ENCODE measurements at regions of chr5 and their contacts with region 1.

Region 1: GRCh38 chr5:142922223-142922952 is 152.2 kb downstream of the ARHGAP26 start:
- DNase-seq: peak; percentile 51
- H3K4me3 ChIP-seq: no peak overlapping the region
- H3K27ac ChIP-seq: no peak overlapping the region
- H3K4me1 ChIP-seq: peaks cover 3 to 11% of the 10 kb centered on the region in 2 experiments
- H3K27me3 ChIP-seq: no peaks in the 10 kb centered on the region
- CTCF ChIP-seq: peak; percentile 66
- EP300 ChIP-seq: no peak
- RAD21 ChIP-seq: peak; percentile 79

Region 2: DNA sequence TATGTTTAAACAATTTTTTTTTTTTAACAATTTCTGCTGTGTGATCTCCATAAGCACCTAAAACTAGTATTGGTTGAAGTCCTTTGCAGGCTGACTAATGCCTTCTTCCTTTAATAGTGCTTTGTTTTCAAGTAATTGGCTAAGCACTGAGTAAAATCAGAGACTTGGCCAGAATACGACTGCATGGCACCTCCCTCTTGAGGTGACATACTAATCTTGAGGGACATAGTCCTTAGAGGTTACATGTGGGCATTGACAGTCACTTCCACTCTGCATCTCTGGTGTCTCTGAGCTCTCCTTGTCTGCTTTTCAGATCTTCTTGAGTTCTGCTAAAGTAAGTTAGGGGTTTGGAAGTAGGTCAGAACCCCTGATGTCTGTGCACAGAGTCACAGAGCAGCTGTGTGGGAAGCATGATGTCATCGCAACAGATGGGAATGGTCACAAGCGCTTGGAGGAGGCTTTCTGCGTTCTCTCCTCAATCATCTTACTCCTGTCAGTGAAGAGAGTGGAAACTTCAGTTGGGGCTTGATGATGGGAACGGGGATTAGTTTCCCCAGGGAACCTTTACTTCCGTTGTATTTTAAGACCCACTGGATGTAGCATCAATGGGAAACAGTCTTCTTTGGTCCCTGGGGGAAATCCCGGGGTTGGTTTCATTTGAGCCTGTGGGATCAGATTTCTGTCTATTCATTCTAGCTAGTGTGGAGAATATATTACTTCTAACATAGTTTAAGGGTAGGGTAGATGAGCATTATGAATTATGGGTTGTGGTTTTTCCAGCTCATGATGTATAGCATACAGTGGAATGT is 15.3 kb before region 1 on chr5:
- CTCF ChIA-PET with region 1: interaction called, 28 read pairs
- POLR2A ChIA-PET with region 1: no interaction called
- DNase-seq: no peak
- H3K4me3 ChIP-seq: no peak overlapping the region
- H3K27ac ChIP-seq: no peak overlapping the region
- H3K4me1 ChIP-seq: peaks cover 0 to 8% of the 10 kb centered on the region in 2 experiments; a peak in 1 of 4 replicates
- H3K27me3 ChIP-seq: no peaks in the 10 kb centered on the region
- CTCF ChIP-seq: no peak
- EP300 ChIP-seq: no peak
- RAD21 ChIP-seq: no peak

Region 3: DNA sequence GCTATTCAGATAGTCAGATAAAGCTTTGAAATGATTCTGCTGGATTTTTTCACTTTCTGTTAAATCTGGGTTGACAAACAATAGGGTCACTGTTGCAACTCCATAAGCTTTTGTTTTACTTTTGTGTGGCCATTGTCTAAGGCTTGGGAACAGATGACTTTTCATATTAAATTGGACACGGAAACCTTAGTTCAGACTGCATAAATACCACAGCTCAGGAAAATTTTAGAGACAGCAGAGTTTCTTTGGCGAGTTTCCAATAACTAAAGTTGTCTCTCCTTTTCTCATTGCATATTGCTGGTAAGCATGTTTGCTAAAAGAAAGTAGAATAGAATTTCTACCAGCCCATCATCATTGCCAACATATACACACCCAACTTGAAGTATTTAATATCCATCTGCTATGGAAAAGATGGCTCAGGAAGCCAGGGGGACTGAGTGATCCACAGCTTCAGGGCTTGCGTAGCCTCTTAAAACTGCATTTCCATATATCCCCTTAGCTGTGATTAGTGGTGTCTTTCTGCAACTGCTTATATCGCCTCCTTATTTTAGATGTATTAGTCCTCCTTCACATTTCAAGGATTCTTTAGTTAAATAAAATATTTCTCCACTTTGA is 16.0 kb after region 1 on chr5:
- CTCF ChIA-PET with region 1: interaction called, 20 read pairs
- POLR2A ChIA-PET with region 1: interaction called, 3 read pairs
- DNase-seq: no peak
- H3K4me3 ChIP-seq: no peak overlapping the region
- H3K27ac ChIP-seq: peak overlapping the region in 1 of 2 experiments; percentile 47; a peak in 1 of 4 replicates
- H3K4me1 ChIP-seq: peaks cover 6 to 28% of the 10 kb centered on the region in 2 experiments
- H3K27me3 ChIP-seq: no peaks in the 10 kb centered on the region
- CTCF ChIP-seq: no peak
- EP300 ChIP-seq: no peak
- RAD21 ChIP-seq: no peak

Region 4: DNA sequence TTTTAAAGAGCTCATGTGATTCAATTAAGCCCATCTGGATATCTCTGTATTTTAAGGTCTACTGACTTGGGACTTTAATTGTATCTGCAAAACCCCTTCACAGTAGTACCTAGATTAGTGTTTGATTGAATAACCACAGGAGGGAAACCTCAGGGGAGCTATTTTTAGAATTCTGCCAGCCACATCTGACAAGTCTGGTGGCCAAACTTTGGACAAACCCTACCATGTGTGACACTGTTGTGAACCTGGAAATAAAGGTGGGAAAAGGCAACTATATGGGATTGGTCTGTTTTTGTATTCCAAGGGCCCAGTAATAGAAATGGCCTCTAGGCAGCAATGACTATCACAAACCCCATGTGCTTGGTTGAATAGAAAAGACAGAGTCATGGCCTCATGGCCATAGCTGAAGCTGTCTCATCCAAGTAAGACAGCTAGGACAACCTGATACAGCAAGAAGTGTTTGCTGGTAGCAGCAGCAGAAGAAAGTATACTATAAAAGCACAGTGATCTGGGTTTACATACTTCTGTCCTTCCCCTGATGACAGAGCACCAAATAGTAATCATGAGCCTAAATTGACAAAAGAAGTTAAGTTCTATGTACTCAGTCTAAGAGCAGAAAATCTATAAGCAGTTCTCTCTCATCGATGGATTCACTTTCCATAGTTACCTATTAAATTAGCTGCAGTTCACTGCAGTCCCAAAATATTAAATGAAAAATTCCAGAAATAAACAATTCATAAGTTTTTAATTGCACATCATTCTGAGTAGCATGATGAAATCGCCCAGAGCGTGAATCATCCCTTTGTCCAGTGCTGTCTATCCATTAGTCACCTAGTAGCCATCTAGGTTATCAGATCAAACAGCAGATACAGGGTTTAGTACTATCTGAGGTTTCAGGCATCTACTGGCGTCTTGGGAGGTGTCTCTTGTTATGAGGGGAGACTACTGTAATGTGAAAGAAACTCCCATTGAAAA is 37.6 kb after region 1 on chr5:
- CTCF ChIA-PET with region 1: interaction called, 14 read pairs
- POLR2A ChIA-PET with region 1: no interaction called
- DNase-seq: no peak
- H3K4me3 ChIP-seq: no peak overlapping the region; a peak in 1 of 4 replicates
- H3K27ac ChIP-seq: peak overlapping the region; percentile 34 to 91; a peak in 3 of 4 replicates
- H3K4me1 ChIP-seq: peaks cover 4 to 20% of the 10 kb centered on the region in 2 experiments; a peak in 3 of 4 replicates
- H3K27me3 ChIP-seq: no peaks in the 10 kb centered on the region
- CTCF ChIP-seq: no peak
- EP300 ChIP-seq: peak in 1 of 2 experiments; percentile 90; a peak in 2 of 4 replicates
- RAD21 ChIP-seq: no peak

Region 5: DNA sequence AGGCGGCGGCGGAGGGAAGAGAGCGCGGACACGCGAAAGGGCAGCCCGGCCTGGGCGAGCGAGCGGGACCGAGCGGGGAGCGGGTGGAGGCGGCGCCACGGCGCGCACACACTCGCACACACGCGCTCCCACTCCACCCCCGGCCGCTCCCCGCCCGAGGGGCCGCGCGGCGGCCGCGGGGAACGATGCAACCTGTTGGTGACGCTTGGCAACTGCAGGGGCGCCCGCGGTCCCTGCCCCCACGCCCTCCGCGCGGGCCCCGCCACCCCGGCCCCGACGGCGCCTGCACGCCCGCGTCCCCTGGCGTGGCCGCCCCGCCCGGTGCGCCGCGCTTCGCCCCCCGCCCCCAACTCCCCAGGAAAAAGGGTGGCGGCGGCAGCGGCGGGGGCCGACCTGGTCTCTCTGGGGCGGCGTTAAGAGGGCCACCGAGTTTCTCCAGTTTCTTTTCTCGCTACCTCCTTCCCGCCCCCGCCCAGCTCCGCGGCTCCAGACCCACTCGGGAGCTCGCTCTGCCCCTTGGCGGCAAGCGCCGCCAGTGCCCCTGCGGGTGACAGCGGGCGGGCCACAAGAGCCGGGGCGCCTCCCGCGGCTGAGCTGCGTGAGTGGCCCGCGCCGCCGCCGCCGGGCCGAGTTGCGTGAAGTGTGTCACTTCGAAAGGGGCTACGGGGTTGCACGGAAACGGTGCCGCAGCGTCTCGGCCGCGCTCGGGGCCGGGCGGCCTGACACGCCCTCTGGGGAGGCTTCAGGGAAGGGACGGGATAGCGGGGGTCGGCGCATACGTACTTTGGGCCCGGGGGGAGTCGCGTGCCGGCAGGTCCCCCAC is 481.4 kb after region 1 on chr5 and contains the start of gene NR3C1:
- CTCF ChIA-PET with region 1: interaction called, 14 read pairs
- POLR2A ChIA-PET with region 1: no interaction called
- DNase-seq: peak; percentile 88
- H3K4me3 ChIP-seq: peak within 1 kb of the TSS; percentile 83 to 90
- H3K27ac ChIP-seq: peak within 1 kb of the TSS; percentile 94 to 99
- H3K4me1 ChIP-seq: peaks cover 9 to 19% of the 10 kb centered on the region in 2 experiments; a peak in 3 of 4 replicates
- H3K27me3 ChIP-seq: no peaks in the 10 kb centered on the region
- CTCF ChIP-seq: peak; percentile 46
- EP300 ChIP-seq: no peak
- RAD21 ChIP-seq: peak; percentile 56
- polyA plus RNA-seq, gene NR3C1: 7.1 and 8.2 TPM in 2 replicates

Measured in SK-N-SH (cell line).